ENCODE measurements at regions of chr9 and their contacts with region 1.

Region 1: GRCh38 chr9:99478469-99479027 is 256.5 kb downstream of the SEC61B start:
- DNase-seq: no peak
- ATAC-seq: no peak
- H3K4me3 ChIP-seq: no peak overlapping the region
- H3K4me3 Mint-ChIP-seq: no peak overlapping the region
- H3K27ac ChIP-seq: no peak overlapping the region
- H3K27ac Mint-ChIP-seq: no peak overlapping the region
- H3K4me1 ChIP-seq: no peaks in the 10 kb centered on the region
- H3K4me1 Mint-ChIP-seq: no peaks in the 10 kb centered on the region
- H3K27me3 ChIP-seq: peaks cover 0 to 3% of the 10 kb centered on the region in 2 experiments
- H3K27me3 Mint-ChIP-seq: peaks cover 8% of the 10 kb centered on the region
- CTCF ChIP-seq: no peak

Region 2: DNA sequence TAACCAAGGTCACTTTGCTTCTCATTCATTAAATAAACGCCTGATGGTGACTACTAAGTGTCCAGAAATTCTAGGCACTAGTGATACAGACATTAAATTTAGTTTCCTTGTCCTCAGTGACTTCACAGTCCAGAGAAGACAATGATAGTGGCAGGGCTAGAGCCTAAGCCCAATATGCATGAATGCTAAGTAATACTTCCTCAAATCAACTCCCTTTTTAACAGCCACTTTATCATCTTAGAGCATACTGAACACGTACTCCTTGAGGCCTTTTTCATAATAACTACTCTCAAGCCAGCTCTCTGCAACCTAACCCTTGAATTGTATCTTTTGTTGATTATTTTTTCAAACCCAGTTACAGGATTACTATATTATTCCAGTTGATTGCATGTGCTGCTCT is 502.1 kb after region 1 on chr9:
- CTCF ChIA-PET with region 1: no interaction called
- POLR2A ChIA-PET with region 1: no interaction called
- intact Hi-C with region 1: loop called in 1 of 2 experiments (anchors 5 kb)
- DNase-seq: no peak
- ATAC-seq: no peak
- H3K4me3 ChIP-seq: no peak overlapping the region
- H3K4me3 Mint-ChIP-seq: no peak overlapping the region
- H3K27ac ChIP-seq: no peak overlapping the region
- H3K27ac Mint-ChIP-seq: no peak overlapping the region
- H3K4me1 ChIP-seq: no peaks in the 10 kb centered on the region
- H3K4me1 Mint-ChIP-seq: peaks cover 4% of the 10 kb centered on the region
- H3K27me3 ChIP-seq: no peaks in the 10 kb centered on the region
- H3K27me3 Mint-ChIP-seq: no peaks in the 10 kb centered on the region
- CTCF ChIP-seq: no peak

Measured in CD4-positive, alpha-beta T cell (primary cell).